ENCODE measurements at regions of chr2 and their contacts with region 1.

Region 1: DNA sequence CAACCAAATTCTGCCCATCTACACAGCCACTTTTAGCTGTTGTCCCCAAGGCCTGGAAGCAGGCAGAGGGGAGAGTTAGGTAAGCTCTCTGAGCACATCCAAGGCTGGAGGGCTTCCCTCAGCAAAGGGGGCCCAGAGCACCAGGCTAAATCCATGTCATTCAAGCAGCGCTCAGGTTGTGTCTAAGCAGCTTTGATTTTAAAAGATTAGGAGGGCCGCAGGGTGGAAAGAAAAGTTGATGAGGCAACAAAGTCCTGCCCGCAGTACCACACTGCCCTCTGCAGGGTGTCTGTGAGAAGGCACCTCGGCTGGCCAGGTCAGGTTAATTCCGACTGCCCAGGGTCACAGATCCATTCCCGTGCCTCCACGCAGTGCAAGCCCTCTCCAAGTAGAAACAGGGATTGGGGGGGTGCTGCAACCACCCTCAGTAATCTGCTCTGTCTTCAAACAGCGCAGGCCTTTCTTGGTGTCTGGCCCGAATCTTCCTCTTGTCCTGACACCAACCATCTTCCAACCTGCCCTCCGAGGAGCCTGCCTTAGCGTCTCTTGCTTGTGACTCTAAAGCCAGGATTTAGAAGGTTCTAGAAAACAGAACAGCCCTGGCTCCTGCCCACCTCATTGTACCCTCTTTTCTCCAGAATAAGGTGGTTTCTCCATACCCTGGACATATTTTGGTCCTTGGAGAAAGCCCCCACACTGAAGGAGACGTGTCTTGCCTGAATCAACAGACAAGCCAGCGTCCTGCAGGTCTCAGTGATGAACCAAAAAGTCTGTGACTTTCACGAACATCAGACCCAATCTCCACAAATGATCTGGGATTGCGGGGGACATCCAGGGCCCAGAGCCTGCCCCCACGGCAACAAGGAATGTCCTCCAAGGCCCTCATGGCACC is 289.2 kb downstream of the TNS1 start:
- DNase-seq: peak; percentile 80
- ATAC-seq: peak; percentile 83

Region 2: GRCh38 chr2:216683846-216684507 is 1029.7 kb before region 1 on chr2:
- intact Hi-C with region 1: loop called (anchors 5 kb)
- DNase-seq: peak; percentile 64
- ATAC-seq: peak; percentile 77

Region 3: GRCh38 chr2:217166241-217166850 is 547.3 kb before region 1 on chr2:
- intact Hi-C with region 1: loop called (anchors 10 kb)
- DNase-seq: no peak
- ATAC-seq: peak; percentile 68

Region 4: DNA sequence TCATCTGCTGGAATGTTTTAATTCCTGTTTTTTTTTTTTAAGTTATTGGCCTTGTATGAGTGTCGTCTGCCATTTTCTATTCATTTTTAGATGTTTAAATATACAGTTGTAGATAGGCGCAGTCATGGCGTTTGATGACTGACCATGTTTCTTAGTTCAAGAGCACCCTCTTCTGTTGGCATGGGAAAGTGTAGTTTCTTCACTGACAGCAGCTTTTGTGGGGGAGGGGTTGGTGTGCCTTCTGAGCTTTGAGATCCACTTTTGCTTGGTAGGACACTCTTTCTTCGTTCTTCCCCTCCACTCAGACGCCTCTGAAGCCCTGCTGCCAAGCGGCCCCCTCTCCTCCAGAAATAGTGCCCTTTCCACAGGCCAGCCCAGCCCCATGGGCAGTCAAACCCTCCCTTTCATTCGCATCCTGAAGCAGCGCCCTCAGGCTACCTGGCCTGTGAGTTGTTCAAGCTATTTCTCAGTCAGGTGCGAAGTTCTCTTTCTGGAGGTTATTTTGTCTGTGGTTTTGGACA is 202.8 kb before region 1 on chr2:
- intact Hi-C with region 1: loop called (anchors 5 kb)
- DNase-seq: no peak
- ATAC-seq: peak; percentile 84

Region 5: DNA sequence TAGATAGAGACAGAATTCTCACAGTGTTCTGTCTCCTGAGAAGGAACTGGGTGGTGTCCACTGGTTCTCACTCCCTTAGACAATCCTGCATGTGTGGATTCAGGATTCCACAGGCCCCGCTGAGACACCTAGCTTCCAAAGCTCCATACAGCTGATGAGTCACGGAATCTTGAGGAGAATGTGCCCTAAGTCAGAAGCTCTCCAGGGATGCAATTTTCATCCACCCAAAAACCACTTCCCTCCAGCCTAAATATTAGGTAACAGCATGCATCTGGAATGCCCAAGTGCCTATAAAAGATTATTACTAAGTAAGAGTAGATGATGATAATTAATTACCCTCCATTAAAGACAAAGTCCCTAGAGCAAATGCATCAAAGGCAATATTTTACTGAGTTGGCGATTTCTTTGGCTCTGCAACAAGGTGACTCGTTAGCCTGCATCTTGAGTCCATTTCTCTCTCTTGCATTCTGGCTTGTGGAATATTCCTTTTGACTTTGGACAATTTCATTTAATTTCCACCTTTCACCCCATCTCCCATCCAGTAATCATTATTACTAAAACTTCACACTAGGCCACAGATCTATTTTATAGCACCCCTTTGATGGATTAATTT is 185.9 kb before region 1 on chr2:
- intact Hi-C with region 1: loop called (anchors 5 kb)
- DNase-seq: no peak
- ATAC-seq: no peak

Region 6: DNA sequence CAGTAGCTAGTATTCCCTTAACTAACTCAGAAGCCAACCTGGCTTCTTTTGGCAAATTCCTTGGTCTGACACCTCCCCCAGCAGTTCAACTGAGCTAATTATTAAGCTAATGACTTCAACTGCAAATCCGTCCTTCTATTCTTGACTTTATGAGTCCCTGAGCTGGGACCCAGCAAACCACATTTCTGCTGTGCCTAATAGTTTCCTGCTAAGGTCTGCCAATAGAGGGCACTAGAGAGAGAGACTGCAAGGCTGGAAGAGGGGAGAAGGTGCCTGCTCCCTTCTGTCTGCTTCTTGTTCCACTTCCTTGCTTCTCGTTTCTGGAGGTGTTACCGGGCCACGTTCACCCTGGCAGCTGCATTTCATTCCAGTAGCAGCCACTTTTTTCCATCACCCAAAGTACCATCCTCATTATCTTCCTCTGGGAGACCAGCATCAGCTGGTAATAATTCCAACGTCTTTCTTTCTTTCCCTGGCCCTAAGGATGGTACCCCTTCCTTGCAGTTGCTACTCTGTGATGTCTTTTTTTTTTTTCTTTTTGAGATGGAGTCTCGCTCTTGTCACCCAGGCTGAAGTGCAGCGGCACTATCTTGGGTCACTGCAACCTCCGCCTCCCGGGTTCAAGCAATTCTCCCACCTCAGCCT is 62.8 kb before region 1 on chr2:
- intact Hi-C with region 1: loop called (anchors 5 kb)
- DNase-seq: no peak
- ATAC-seq: peak; percentile 72